SK-N-SH (cell line): ENCODE measurements at regions of chr6 and their contacts with region 1.

Region 1: DNA sequence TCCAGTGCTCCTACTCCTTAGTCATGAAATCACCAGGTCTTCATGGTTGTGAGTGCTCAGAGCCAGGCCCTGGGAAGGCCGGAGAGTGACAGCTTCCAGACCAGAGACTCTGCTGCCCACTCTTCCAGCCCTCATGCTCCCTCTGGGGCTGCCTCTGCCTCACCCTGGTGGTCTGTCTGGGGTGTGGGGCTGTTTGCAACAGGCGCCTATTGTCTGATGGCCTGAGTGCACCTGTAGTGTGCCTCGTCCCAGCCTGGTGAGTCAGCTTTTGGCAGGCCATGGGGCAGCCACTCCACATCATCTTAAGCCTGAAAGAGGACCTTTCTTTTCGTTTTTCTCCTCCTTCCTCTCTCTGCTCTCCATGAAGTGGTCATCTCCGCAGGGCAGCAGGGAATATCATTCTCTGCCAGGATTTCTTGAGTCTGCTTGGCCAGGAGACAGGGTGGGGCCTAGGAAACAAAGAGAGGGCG is 173.8 kb downstream of the VEGFA start:
- DNase-seq: no peak
- H3K4me3 ChIP-seq: no peak overlapping the region
- H3K27ac ChIP-seq: peak overlapping the region in 1 of 2 experiments; percentile 100; a peak in 2 of 4 replicates
- H3K4me1 ChIP-seq: peaks cover 0 to 51% of the 10 kb centered on the region in 2 experiments; a peak in 3 of 4 replicates
- H3K27me3 ChIP-seq: no peaks in the 10 kb centered on the region
- CTCF ChIP-seq: no peak
- EP300 ChIP-seq: no peak
- RAD21 ChIP-seq: no peak

Region 2: DNA sequence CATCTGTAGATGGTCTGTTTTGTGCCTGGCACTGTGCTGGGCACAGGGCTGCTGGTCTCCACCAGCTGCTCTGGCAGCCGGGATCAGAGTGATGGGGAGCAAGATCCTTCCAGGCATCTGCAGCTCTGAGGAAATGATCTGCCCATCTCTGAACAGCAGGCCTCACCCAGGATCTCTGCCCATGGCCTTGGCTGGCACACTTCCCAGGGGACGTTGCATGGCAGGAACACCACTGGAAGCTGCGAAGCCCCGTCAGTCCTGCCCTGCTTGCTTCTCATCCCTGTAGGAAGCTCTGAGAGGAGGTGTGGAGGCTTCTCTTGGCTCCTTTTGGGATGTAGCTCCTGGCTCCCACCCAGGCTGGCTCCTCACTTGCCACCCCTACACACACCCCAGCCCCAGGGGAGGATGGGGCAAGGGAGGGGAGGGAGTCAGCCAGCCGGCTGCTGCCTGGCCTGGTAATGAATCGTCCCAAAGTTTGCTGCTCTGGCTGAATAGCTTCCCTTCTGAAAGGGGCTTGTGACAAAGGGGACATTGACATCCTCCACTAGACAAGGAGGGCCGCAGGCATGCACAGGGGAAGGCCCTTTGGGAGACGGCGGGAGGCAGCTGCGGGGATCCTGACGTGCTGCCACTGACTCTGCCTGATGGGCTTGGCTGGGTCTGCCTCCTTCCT is 64.9 kb before region 1 on chr6:
- CTCF ChIA-PET with region 1: no interaction called
- POLR2A ChIA-PET with region 1: interaction called, 10 read pairs
- DNase-seq: peak; percentile 80
- H3K4me3 ChIP-seq: no peak overlapping the region
- H3K27ac ChIP-seq: peak overlapping the region in 1 of 2 experiments; percentile 94; a peak in 2 of 4 replicates
- H3K4me1 ChIP-seq: peaks cover 0 to 63% of the 10 kb centered on the region in 2 experiments; a peak in 2 of 4 replicates
- H3K27me3 ChIP-seq: no peaks in the 10 kb centered on the region
- CTCF ChIP-seq: no peak
- EP300 ChIP-seq: peak in 1 of 2 experiments; percentile 53; a peak in 2 of 4 replicates
- RAD21 ChIP-seq: peak; percentile 26; the same call in 1 of the 2 replicates

Region 3: DNA sequence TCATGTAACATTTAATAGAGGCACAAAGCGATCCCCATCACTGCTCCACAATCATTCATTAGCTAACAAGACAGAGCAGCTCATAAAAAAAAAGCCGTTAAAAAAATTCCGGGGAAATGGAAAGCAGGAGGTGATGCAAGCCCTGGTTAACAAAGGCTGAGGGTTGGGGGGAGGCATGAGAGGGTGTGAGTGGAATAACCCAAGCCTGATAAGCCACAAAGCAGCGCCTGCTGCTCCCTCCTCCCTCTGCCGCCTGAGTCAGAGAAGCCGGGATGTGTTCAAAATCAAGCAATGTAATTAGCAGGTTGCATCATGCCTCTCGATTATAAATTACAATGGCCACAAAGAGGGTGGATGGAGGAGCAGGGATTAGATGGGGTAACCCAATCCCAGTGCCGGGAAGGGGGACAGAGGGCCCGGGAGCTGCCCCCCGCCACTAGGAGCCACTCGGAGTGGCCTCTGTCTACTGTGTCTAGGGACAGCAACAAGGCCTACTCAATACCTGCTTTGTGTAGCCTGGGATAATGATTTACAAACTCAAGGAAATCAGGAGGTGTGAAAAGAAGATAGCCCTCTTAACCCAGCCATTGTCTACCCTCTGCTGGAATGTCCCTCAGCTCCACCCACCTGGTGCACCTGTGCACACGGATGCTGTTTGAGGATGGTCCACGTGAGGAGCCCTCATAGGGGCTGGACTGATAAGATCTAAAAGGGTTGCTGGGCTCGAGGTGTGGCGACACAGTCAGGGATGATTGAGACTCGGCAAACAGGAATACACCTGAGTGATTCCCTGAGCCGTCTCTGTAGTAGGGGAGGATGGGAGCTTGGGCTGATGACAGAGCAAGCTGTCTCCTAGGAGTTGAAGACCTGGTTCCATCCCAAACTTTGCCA is 16.9 kb before region 1 on chr6:
- CTCF ChIA-PET with region 1: interaction called, 22 read pairs
- POLR2A ChIA-PET with region 1: interaction called, 30 read pairs
- DNase-seq: peak; percentile 81
- H3K4me3 ChIP-seq: no peak overlapping the region
- H3K27ac ChIP-seq: peak overlapping the region; percentile 27 to 98; a peak in 3 of 4 replicates
- H3K4me1 ChIP-seq: peaks cover 40 to 82% of the 10 kb centered on the region in 2 experiments
- H3K27me3 ChIP-seq: no peaks in the 10 kb centered on the region
- CTCF ChIP-seq: no peak
- EP300 ChIP-seq: peak in 1 of 2 experiments; percentile 51; a peak in 2 of 4 replicates
- RAD21 ChIP-seq: peak; percentile 34

Region 4: GRCh38 chr6:44052419-44053023 is 108.7 kb after region 1 on chr6:
- CTCF ChIA-PET with region 1: interaction called, 11 read pairs
- POLR2A ChIA-PET with region 1: interaction called, 19 read pairs
- DNase-seq: peak; percentile 60
- H3K4me3 ChIP-seq: no peak overlapping the region
- H3K27ac ChIP-seq: peak overlapping the region; percentile 68 to 94; a peak in 3 of 4 replicates
- H3K4me1 ChIP-seq: peaks cover 66 to 99% of the 10 kb centered on the region in 2 experiments
- H3K27me3 ChIP-seq: no peaks in the 10 kb centered on the region
- CTCF ChIP-seq: no peak
- EP300 ChIP-seq: no peak
- RAD21 ChIP-seq: no peak

Region 5: DNA sequence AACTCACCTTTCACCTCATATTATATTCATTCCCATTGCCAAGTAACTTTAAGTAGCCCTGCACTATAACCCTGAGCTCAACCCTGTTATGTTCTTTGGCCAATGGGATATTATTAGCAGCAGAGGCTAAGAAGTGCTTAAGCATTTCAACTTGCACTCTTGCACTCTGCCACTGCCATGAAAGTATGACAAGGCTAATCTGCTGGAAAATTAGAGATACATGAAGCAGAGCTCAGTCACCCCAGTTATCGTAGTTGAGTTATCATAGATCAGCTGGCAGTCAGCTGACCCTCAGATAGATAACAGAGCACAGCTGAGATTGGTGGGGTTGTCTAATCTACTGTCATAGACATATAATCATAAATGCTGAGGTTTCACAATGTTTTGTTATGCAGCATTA is 1174.9 kb after region 1 on chr6:
- CTCF ChIA-PET with region 1: no interaction called
- POLR2A ChIA-PET with region 1: no interaction called
- DNase-seq: no peak
- H3K4me3 ChIP-seq: no peak overlapping the region
- H3K27ac ChIP-seq: no peak overlapping the region
- H3K4me1 ChIP-seq: no peaks in the 10 kb centered on the region; a peak in 1 of 4 replicates
- H3K27me3 ChIP-seq: no peaks in the 10 kb centered on the region
- CTCF ChIP-seq: no peak
- EP300 ChIP-seq: no peak
- RAD21 ChIP-seq: no peak